ENCODE measurements at regions of chr5 and their contacts with region 1.

Region 1: GRCh38 chr5:171858303-171858702 is 72.7 kb downstream of the SMIM23 start:
- DNase-seq: peak; percentile 37
- ATAC-seq: peak; percentile 85
- H3K4me3 Mint-ChIP-seq: no peak overlapping the region
- H3K27ac Mint-ChIP-seq: peak overlapping the region; percentile 73
- H3K4me1 Mint-ChIP-seq: peaks cover 16% of the 10 kb centered on the region
- H3K27me3 Mint-ChIP-seq: no peaks in the 10 kb centered on the region
- CTCF ChIP-seq: peak; percentile 57

Region 2: DNA sequence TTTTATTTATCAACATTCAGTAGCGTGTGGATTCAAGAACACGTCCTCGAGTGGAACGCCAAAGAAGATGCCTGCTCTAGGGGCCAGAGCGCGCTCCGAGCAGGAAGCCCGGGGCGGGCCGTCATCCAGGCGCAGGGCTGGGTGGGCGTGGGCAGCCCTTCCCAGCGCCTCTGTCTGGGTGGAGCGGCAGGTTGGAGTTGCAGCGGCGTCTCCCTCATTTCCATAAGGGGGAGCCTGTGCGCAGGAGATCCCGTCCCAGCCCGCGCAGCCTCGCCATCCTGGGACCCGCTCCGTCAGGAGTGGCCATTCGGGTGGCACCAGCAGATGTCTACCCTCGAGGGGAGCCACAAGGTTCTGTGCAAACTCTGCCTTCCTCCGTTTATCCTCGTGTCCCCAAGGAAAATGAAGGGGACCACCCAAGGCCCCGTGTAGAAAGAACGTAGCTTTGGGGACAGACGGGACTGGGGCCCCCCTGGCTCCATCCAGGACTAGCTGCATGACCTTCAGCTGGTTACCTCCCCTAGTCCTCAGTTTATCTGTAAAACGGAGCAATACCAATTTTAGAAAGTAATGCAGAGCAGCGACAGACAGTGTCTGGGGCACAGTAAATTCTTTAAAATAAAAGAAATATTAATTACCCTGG is 228.2 kb before region 1 on chr5:
- CTCF ChIA-PET with region 1: interaction called, 22 read pairs
- POLR2A ChIA-PET with region 1: no interaction called
- DNase-seq: peak; percentile 77
- ATAC-seq: peak; percentile 99
- H3K4me3 Mint-ChIP-seq: peak overlapping the region; percentile 60
- H3K27ac Mint-ChIP-seq: no peak overlapping the region
- H3K4me1 Mint-ChIP-seq: peaks cover 25% of the 10 kb centered on the region
- H3K27me3 Mint-ChIP-seq: peaks cover 67% of the 10 kb centered on the region
- CTCF ChIP-seq: no peak

Region 3: GRCh38 chr5:171673328-171673727 is 185.0 kb before region 1 on chr5:
- CTCF ChIA-PET with region 1: no interaction called
- POLR2A ChIA-PET with region 1: no interaction called
- DNase-seq: no peak
- ATAC-seq: no peak
- H3K4me3 Mint-ChIP-seq: no peak overlapping the region
- H3K27ac Mint-ChIP-seq: no peak overlapping the region
- H3K4me1 Mint-ChIP-seq: peaks cover 14% of the 10 kb centered on the region
- H3K27me3 Mint-ChIP-seq: no peaks in the 10 kb centered on the region; the same call in 1 of the 2 replicates
- CTCF ChIP-seq: no peak

Region 4: GRCh38 chr5:171757853-171758535 is 100.3 kb before region 1 on chr5:
- CTCF ChIA-PET with region 1: no interaction called
- POLR2A ChIA-PET with region 1: no interaction called
- DNase-seq: no peak
- ATAC-seq: no peak
- H3K4me3 Mint-ChIP-seq: no peak overlapping the region
- H3K27ac Mint-ChIP-seq: no peak overlapping the region
- H3K4me1 Mint-ChIP-seq: no peaks in the 10 kb centered on the region
- H3K27me3 Mint-ChIP-seq: no peaks in the 10 kb centered on the region
- CTCF ChIP-seq: no peak

Region 5: DNA sequence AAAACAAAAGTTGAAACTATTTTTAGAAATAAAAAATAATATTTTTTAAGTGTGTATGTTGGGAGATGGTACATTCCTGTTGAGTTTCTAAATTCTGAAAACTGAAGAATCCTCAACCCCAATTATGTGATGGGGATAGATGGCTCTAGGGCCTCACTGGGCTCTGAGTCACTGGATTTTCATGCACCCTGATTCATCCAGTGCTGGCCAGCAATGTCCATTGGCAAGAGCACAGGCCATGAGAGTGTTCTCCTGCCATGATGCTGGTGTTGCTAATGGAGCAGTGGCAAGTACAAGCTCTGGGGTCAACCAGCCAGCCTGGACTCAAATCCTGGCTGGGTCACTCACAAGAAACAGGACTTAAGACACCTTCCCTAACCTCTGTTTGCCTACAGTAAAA is 49.4 kb before region 1 on chr5:
- CTCF ChIA-PET with region 1: no interaction called
- POLR2A ChIA-PET with region 1: no interaction called
- DNase-seq: no peak
- ATAC-seq: no peak
- H3K4me3 Mint-ChIP-seq: no peak overlapping the region
- H3K27ac Mint-ChIP-seq: no peak overlapping the region
- H3K4me1 Mint-ChIP-seq: peaks cover 21% of the 10 kb centered on the region
- H3K27me3 Mint-ChIP-seq: peaks cover 2% of the 10 kb centered on the region; the same call in 1 of the 2 replicates
- CTCF ChIP-seq: no peak

Region 6: DNA sequence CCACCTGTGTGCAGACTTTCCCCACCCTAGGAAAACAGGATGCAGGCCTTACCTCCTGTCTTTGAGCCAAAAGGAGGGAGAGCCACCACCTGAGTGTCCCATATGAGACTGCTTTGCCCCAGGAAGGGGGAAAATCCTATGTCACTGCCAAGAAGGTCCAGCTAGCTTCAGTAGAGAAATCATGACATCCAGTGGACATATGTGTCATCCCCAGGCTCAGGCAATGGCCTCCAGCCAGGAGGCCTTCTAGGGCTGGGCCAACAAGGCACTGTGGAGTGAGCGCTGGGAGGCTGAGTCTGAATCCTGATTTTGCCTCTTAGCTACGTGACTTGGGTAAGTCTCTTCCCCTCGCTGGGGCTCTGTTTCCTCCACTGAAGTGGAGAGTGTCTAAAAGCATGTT is 12.4 kb before region 1 on chr5:
- CTCF ChIA-PET with region 1: interaction called, 13 read pairs
- POLR2A ChIA-PET with region 1: no interaction called
- DNase-seq: no peak
- ATAC-seq: no peak
- H3K4me3 Mint-ChIP-seq: no peak overlapping the region
- H3K27ac Mint-ChIP-seq: no peak overlapping the region
- H3K4me1 Mint-ChIP-seq: peaks cover 5% of the 10 kb centered on the region
- H3K27me3 Mint-ChIP-seq: 0 out of 2 replicates have a peak, but pooled peaks cover 3% of the 10 kb centered on the region
- CTCF ChIP-seq: no peak

Region 7: GRCh38 chr5:171871711-171872110 is 13.4 kb after region 1 on chr5:
- CTCF ChIA-PET with region 1: interaction called, 10 read pairs
- POLR2A ChIA-PET with region 1: no interaction called
- DNase-seq: no peak
- ATAC-seq: no peak
- H3K4me3 Mint-ChIP-seq: no peak overlapping the region
- H3K27ac Mint-ChIP-seq: no peak overlapping the region
- H3K4me1 Mint-ChIP-seq: no peaks in the 10 kb centered on the region
- H3K27me3 Mint-ChIP-seq: no peaks in the 10 kb centered on the region
- CTCF ChIP-seq: no peak

Region 8: GRCh38 chr5:171931163-171931562 is 72.9 kb after region 1 on chr5:
- CTCF ChIA-PET with region 1: no interaction called
- POLR2A ChIA-PET with region 1: no interaction called
- DNase-seq: no peak
- ATAC-seq: no peak
- H3K4me3 Mint-ChIP-seq: no peak overlapping the region
- H3K27ac Mint-ChIP-seq: peak overlapping the region; percentile 42; the same call in 1 of the 2 replicates
- H3K4me1 Mint-ChIP-seq: peaks cover 44% of the 10 kb centered on the region
- H3K27me3 Mint-ChIP-seq: no peaks in the 10 kb centered on the region
- CTCF ChIP-seq: no peak

Region 9: GRCh38 chr5:172044631-172045314 is 186.5 kb after region 1 on chr5:
- CTCF ChIA-PET with region 1: interaction called, 10 read pairs
- POLR2A ChIA-PET with region 1: no interaction called
- DNase-seq: no peak
- ATAC-seq: peak; percentile 81
- H3K4me3 Mint-ChIP-seq: no peak overlapping the region
- H3K27ac Mint-ChIP-seq: peak overlapping the region; percentile 87; the same call in 1 of the 2 replicates
- H3K4me1 Mint-ChIP-seq: peaks cover 27% of the 10 kb centered on the region
- H3K27me3 Mint-ChIP-seq: no peaks in the 10 kb centered on the region
- CTCF ChIP-seq: 0 out of 2 replicates have a peak, but pooled peaks have one; percentile 7